Activated B cell treated with CpG ODN at 0.5 μM for 24 hours (primary cell): ENCODE measurements at regions of chr9 and their contacts with region 1.

Region 1: DNA sequence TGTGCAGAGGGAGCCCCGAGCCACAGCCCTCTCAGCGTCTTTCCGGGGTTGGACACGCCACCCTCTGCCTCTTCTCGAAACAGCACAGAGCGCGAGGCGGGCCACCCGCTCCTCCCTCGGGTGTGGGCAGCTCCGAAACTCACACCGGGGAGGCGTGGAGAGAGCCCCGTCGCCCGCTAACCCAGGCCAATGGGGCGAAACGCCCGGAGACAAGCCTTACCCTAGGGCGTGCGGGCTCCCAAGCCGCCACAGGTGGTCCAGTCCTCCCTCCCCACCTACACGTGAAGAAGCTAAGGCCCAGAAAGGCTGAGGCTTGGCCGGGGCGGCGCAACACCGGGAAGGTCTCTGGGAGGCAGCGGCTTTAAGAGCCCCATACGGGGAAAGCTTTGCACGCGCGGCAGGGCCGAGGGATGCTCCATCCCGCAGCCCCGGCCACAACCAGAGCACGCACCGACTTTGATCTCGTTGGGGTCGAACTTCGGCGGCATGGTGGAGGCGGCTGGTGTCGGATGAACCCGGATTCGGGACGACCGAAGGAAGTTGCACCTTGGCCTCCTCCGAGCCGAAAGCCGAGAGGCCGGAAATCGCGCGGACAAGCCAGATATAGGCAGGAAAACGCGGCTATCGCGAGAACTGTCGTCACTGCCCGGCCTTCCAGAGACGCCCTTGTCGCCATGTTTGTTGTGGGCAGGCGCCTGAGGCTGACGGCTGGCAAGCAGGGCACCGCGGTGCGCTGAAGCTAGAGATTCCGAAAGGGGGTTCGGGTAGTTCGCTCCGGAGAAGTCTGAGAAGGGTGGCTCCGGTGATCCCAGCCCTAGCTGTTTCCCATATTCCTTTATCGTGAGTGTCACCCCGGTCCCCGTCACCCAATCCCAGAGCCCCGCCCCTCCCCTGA is at the starts of genes LRSAM1 and RPL12:
- DNase-seq: peak; percentile 99
- ATAC-seq: peak; percentile 66
- H3K4me3 Mint-ChIP-seq: peak within 1 kb of the TSS; percentile 96
- H3K27ac Mint-ChIP-seq: peak within 1 kb of the TSS; percentile 96
- H3K4me1 Mint-ChIP-seq: peaks cover 68% of the 10 kb centered on the region
- H3K27me3 Mint-ChIP-seq: no peaks in the 10 kb centered on the region
- CTCF ChIP-seq: no peak
- total RNA-seq, gene LRSAM1: 19.4 and 23.9 TPM in 2 replicates
- total RNA-seq, gene RPL12: 2,278 and 2,307 TPM in 2 replicates

Region 2: GRCh38 chr9:126366366-126367011 is 1084.6 kb before region 1 on chr9:
- CTCF ChIA-PET with region 1: no interaction called
- POLR2A ChIA-PET with region 1: no interaction called
- intact Hi-C with region 1: no loop called
- DNase-seq: no peak
- ATAC-seq: no peak
- H3K4me3 Mint-ChIP-seq: no peak overlapping the region
- H3K27ac Mint-ChIP-seq: no peak overlapping the region
- H3K4me1 Mint-ChIP-seq: no peaks in the 10 kb centered on the region
- H3K27me3 Mint-ChIP-seq: peaks cover 2% of the 10 kb centered on the region
- CTCF ChIP-seq: no peak

Region 3: GRCh38 chr9:127214421-127215267 is 236.4 kb before region 1 on chr9:
- CTCF ChIA-PET with region 1: interaction called, 6 read pairs
- POLR2A ChIA-PET with region 1: interaction called, 6 read pairs
- intact Hi-C with region 1: loop called (anchors 1 kb)
- DNase-seq: no peak
- ATAC-seq: peak; percentile 86
- H3K4me3 Mint-ChIP-seq: no peak overlapping the region
- H3K27ac Mint-ChIP-seq: no peak overlapping the region
- H3K4me1 Mint-ChIP-seq: peaks cover 4% of the 10 kb centered on the region
- H3K27me3 Mint-ChIP-seq: no peaks in the 10 kb centered on the region
- CTCF ChIP-seq: peak; percentile 17

Region 4: GRCh38 chr9:127244609-127245601 is 206.2 kb before region 1 on chr9:
- CTCF ChIA-PET with region 1: no interaction called
- POLR2A ChIA-PET with region 1: interaction called, 10 read pairs
- intact Hi-C with region 1: loop called (anchors 1 kb)
- DNase-seq: peak; percentile 91
- ATAC-seq: peak; percentile 100
- H3K4me3 Mint-ChIP-seq: peak overlapping the region; percentile 90
- H3K27ac Mint-ChIP-seq: peak overlapping the region; percentile 86
- H3K4me1 Mint-ChIP-seq: peaks cover 11% of the 10 kb centered on the region
- H3K27me3 Mint-ChIP-seq: no peaks in the 10 kb centered on the region
- CTCF ChIP-seq: no peak

Region 5: DNA sequence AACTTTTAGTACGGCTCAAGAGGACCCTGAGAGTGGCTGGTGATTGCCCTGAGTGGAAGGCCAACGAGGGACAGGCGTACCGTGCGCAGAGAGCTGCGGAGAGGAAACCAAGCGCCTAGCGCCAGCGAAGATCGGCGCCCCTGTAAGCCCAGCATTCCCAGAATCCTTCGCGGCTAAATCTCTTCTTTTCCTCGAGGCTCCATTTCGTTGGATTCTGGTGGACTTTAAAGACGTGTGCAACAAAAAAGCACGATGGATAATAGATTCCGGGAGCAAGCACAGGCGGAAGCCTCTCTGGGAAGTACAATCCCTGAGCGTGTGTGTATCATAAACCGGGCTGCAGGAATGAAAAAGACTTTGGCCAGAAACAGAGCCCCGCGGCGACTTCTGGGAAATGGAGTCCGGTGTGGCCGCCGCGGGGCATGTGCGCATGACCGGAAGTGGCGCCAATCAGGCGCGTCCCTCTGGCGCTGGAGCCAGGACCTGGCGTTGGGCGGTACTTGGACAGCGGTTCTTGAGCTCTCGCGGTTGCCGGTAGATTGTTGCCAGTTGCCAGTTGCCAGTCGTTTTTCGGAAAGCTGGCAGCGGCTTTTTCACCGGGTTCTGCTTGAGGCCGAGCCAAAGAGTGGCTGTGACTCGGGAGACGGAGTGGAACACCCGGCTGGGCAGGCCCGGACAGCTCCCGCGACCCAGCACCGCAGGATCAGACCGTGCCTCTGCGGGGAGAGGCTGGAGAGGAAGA is 27.0 kb before region 1 on chr9 and contains the start of gene ZNF79:
- CTCF ChIA-PET with region 1: no interaction called
- POLR2A ChIA-PET with region 1: interaction called, 39 read pairs
- intact Hi-C with region 1: loop called (anchors 1 kb)
- DNase-seq: peak; percentile 93
- ATAC-seq: peak; percentile 94
- H3K4me3 Mint-ChIP-seq: peak within 1 kb of the TSS; percentile 99
- H3K27ac Mint-ChIP-seq: peak within 1 kb of the TSS; percentile 98
- H3K4me1 Mint-ChIP-seq: peaks cover 41% of the 10 kb centered on the region
- H3K27me3 Mint-ChIP-seq: no peaks in the 10 kb centered on the region
- CTCF ChIP-seq: no peak
- total RNA-seq, gene ZNF79: 13.5 and 14.0 TPM in 2 replicates

Region 6: GRCh38 chr9:127463382-127463781 is 12.3 kb after region 1 on chr9:
- CTCF ChIA-PET with region 1: no interaction called
- POLR2A ChIA-PET with region 1: interaction called, 11 read pairs
- intact Hi-C with region 1: no loop called
- DNase-seq: no peak
- ATAC-seq: no peak
- H3K4me3 Mint-ChIP-seq: no peak overlapping the region
- H3K27ac Mint-ChIP-seq: no peak overlapping the region
- H3K4me1 Mint-ChIP-seq: no peaks in the 10 kb centered on the region
- H3K27me3 Mint-ChIP-seq: no peaks in the 10 kb centered on the region
- CTCF ChIP-seq: no peak

Region 7: GRCh38 chr9:127715394-127716337 is 264.6 kb after region 1 on chr9 and contains the starts of genes PTRH1 and TTC16:
- CTCF ChIA-PET with region 1: no interaction called
- POLR2A ChIA-PET with region 1: interaction called, 4 read pairs
- intact Hi-C with region 1: loop called (anchors 2 kb)
- DNase-seq: peak; percentile 97
- ATAC-seq: peak; percentile 96
- H3K4me3 Mint-ChIP-seq: peak within 1 kb of the TSS; percentile 100
- H3K27ac Mint-ChIP-seq: peak within 1 kb of the TSS; percentile 92
- H3K4me1 Mint-ChIP-seq: peaks cover 21% of the 10 kb centered on the region
- H3K27me3 Mint-ChIP-seq: no peaks in the 10 kb centered on the region
- CTCF ChIP-seq: no peak
- total RNA-seq, gene PTRH1: 12.7 and 13.8 TPM in 2 replicates
- total RNA-seq, gene TTC16: not detected in 2 replicates